GM18951 (cell line): ENCODE measurements at regions of chr2 and their contacts with region 1.

Region 1: GRCh38 chr2:168118733-168119514 is 128.5 kb downstream of the STK39 start:
- POLR2A ChIP-seq: no peak

Region 2: DNA sequence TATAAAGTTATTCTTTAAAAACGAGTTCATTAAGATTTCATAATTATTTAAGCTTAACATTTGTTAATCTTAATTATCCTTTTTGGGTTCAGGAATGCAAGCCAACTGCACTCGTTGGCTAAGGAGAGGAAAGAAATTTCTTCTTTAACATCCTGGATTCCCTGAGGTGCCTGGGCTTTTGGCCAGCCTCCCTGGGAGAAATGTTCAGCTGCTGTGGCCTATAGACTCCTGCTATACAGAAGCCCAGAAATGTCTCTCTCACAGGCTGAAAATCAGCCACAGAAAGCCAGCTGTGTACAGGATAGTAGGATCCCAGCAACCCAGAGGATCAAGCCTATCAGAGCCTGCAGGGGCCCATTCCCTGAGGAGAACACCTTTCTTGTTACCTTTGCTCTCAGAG is 800.3 kb before region 1 on chr2:
- in situ Hi-C with region 1: no loop called
- POLR2A ChIP-seq: no peak

Region 3: GRCh38 chr2:167964650-167965413 is 154.1 kb before region 1 on chr2:
- in situ Hi-C with region 1: loop called (anchors 5 kb)
- POLR2A ChIP-seq: no peak

Region 4: GRCh38 chr2:168039885-168040284 is 79.0 kb before region 1 on chr2:
- in situ Hi-C with region 1: no loop called
- POLR2A ChIP-seq: no peak